Calu3 (cell line): ENCODE measurements at regions of chr17 and their contacts with region 1.

Region 1: DNA sequence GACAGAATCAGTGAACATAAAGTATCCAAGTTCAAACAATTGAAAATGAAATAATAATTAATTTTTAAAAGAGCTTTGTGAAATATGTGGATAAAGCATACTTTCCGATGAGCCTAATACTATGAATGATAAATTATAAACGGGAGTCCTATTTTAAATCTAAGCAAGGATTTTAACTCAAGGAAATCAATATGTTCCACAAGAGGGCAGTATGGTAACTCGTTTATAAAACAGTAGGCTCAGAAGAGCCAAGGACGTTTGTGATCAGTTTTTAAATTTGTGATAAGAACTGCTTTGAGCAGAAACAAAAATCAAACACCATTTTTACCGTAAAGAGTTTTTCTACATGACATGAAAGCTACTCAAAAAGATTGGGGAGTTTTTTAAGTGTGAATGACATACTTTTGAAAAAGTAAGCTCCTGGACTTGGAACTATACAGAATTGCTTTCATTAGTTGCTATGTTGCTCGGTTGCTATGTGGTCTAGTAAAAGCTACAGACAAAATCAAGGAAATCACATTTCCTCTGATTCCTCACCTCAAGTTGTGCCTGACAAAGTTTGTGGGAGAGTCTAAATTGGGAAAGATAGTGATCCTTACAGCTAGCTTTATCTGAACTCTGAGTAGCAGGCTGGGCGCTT is 11.8 kb upstream of the TEKT1 start:
- DNase-seq: no peak
- H3K4me3 Mint-ChIP-seq: no peak overlapping the region
- H3K27ac Mint-ChIP-seq: no peak overlapping the region
- H3K4me1 Mint-ChIP-seq: no peaks in the 10 kb centered on the region
- H3K27me3 Mint-ChIP-seq: peaks cover 7% of the 10 kb centered on the region
- CTCF ChIP-seq: no peak

Region 2: DNA sequence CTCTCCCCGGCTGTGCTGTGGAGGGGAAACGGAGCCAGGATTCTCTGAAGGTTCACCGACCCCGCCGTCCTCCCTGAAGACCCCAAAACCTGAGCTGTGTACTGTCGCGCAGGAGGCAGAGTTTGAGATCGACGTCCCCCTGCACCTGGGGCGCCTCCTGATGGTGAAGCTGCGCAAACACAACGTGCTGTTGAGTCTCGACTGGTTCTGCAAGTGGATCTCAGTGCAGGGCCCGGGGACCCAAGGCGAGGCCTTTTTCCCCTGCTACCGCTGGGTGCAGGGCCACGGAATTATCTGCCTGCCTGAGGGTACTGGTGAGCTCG is 50.8 kb after region 1 on chr17:
- CTCF ChIA-PET with region 1: interaction called, 7 read pairs
- intact Hi-C with region 1: loop called (anchors 2 kb)
- DNase-seq: peak; percentile 41
- H3K4me3 Mint-ChIP-seq: peak overlapping the region; percentile 51
- H3K27ac Mint-ChIP-seq: no peak overlapping the region
- H3K4me1 Mint-ChIP-seq: peaks cover 6% of the 10 kb centered on the region
- H3K27me3 Mint-ChIP-seq: peaks cover 96% of the 10 kb centered on the region
- CTCF ChIP-seq: peak; percentile 21

Region 3: GRCh38 chr17:6948562-6948961 is 105.2 kb after region 1 on chr17:
- CTCF ChIA-PET with region 1: no interaction called
- intact Hi-C with region 1: no loop called
- DNase-seq: no peak
- H3K4me3 Mint-ChIP-seq: no peak overlapping the region
- H3K27ac Mint-ChIP-seq: no peak overlapping the region
- H3K4me1 Mint-ChIP-seq: no peaks in the 10 kb centered on the region
- H3K27me3 Mint-ChIP-seq: peaks cover 5% of the 10 kb centered on the region
- CTCF ChIP-seq: no peak